Activated CD8-positive, alpha-beta T cell treated with anti-CD3 and anti-CD28 coated beads for 36 hours (primary cell): ENCODE measurements at regions of chr7 and their contacts with region 1.

Region 1: DNA sequence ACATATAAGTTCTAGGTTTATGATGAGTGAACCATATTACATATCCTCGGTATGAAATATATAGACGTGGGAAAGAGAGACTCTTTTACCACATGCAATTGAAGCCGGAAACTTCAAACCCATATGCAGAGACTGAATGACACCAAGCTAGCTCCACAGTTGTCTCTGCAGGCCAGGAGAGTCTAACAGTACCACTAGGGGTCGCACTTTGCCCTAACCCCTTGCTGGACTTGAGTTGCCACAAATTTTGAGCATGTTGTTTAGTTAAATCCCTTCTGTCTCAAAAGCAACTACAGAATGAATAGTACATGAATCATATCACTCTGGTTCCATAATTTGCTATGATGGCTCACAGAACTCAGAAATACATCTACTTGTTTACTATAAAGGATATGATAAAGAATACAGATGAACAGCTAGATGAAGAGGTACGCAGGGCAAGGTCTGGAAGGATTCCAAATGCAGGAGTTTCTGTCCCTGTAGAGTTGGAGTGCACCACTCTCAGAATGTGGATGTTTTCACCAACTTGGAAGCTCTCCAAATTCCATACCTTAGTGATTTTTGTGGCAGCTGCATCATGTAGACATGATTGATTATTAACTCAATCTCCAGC is 112.4 kb upstream of the YAE1 start:
- DNase-seq: peak; percentile 75
- ATAC-seq: peak; percentile 79
- H3K4me3 Mint-ChIP-seq: no peak overlapping the region
- H3K27ac Mint-ChIP-seq: no peak overlapping the region
- H3K4me1 Mint-ChIP-seq: no peaks in the 10 kb centered on the region
- H3K27me3 Mint-ChIP-seq: peaks cover 6% of the 10 kb centered on the region
- CTCF ChIP-seq: peak; percentile 77

Region 2: DNA sequence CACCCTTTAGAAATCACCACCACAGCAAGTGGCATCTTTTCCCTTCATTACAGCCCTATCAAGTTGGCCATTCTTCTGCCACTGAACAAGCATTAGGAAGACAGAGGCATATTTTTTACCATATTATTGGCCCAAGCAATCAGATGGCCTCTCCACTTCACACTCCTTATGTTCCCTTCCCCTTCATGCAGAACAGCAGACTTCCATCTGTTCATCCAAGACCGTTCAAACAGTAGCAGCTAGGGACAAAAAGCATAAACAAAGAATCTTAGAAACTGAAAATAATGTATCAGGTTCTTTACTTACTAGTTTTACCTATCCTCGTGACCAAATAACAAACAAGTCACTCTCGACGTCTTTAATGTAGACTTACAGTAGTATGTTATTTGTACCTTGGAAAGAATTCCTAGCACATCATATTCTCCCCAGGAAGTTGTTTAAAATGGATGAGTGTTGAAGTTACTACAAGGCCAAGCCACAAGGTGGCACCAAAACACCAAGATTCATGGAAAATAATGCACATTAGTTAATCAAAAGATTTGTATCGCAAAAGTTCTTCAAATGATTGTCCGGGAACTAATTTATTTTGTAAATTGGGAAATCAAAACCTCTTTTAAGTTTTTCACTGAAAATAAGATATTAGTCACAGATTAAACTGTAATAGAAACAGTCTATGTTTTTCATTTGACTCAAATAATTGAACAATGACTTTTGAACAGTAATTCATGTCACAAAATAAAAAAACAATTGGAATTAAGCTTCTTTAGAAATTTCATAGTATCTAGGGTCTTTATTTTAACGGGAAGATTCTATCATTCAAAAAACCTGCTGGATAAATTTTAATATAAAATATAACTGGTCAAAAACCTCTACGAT is 657.0 kb before region 1 on chr7:
- CTCF ChIA-PET with region 1: interaction called, 13 read pairs
- POLR2A ChIA-PET with region 1: no interaction called
- intact Hi-C with region 1: no loop called
- DNase-seq: peak; percentile 60
- ATAC-seq: no peak
- H3K4me3 Mint-ChIP-seq: no peak overlapping the region
- H3K27ac Mint-ChIP-seq: no peak overlapping the region
- H3K4me1 Mint-ChIP-seq: no peaks in the 10 kb centered on the region
- H3K27me3 Mint-ChIP-seq: no peaks in the 10 kb centered on the region
- CTCF ChIP-seq: peak; percentile 86

Region 3: DNA sequence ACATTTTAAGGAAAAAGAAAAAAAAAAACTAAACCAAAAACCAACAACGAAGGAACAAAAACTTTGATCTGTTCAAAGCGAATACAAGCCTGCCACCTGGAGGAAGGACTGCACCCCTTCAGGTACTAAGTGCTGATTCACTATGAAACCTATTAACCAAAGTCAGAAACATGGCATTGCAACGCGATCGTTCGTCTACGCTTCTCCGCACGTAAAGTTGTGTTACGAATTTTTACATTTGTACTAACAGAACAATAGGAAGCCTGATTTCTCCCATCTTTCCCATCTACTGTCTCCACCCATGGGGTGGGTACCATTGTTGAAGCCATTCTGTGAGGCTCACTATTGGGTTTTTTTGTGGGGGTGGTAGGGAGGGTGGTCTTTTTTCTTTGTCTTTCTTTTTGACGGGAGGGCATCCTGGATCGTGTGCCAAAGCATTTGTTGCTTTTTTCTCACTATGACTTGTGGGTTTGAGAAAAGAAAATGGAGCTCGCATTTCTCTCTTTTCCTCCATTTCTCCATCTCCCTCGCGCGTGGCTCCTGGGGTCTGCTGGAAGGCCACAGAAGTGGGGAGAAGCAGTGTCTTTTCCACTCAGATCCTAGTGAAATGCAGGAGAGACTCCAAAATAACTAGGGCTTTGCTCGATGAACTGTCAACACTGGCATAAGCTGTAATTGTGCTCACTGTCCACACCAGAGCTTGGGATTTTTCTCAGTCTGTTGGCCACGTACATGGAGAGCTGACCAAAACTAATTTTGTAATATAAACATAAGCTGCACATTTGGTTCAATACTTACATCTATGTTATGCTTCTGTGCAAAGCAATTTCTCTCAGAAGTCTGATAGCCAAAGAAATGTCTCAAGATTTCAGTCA is 11.4 kb after region 1 on chr7:
- CTCF ChIA-PET with region 1: interaction called, 33 read pairs
- POLR2A ChIA-PET with region 1: interaction called, 4 read pairs
- intact Hi-C with region 1: no loop called
- DNase-seq: peak; percentile 68
- ATAC-seq: peak; percentile 90
- H3K4me3 Mint-ChIP-seq: no peak overlapping the region
- H3K27ac Mint-ChIP-seq: no peak overlapping the region
- H3K4me1 Mint-ChIP-seq: peaks cover 7% of the 10 kb centered on the region
- H3K27me3 Mint-ChIP-seq: peaks cover 3% of the 10 kb centered on the region
- CTCF ChIP-seq: peak; percentile 86

Region 4: GRCh38 chr7:39517240-39517639 is 63.4 kb after region 1 on chr7:
- CTCF ChIA-PET with region 1: interaction called, 26 read pairs
- POLR2A ChIA-PET with region 1: no interaction called
- intact Hi-C with region 1: loop called (anchors 1 kb)
- DNase-seq: no peak
- ATAC-seq: no peak
- H3K4me3 Mint-ChIP-seq: no peak overlapping the region
- H3K27ac Mint-ChIP-seq: no peak overlapping the region
- H3K4me1 Mint-ChIP-seq: peaks cover 2% of the 10 kb centered on the region
- H3K27me3 Mint-ChIP-seq: peaks cover 5% of the 10 kb centered on the region
- CTCF ChIP-seq: no peak